AG04450 (cell line): ENCODE measurements at regions of chr4 and their contacts with region 1.

Region 1: DNA sequence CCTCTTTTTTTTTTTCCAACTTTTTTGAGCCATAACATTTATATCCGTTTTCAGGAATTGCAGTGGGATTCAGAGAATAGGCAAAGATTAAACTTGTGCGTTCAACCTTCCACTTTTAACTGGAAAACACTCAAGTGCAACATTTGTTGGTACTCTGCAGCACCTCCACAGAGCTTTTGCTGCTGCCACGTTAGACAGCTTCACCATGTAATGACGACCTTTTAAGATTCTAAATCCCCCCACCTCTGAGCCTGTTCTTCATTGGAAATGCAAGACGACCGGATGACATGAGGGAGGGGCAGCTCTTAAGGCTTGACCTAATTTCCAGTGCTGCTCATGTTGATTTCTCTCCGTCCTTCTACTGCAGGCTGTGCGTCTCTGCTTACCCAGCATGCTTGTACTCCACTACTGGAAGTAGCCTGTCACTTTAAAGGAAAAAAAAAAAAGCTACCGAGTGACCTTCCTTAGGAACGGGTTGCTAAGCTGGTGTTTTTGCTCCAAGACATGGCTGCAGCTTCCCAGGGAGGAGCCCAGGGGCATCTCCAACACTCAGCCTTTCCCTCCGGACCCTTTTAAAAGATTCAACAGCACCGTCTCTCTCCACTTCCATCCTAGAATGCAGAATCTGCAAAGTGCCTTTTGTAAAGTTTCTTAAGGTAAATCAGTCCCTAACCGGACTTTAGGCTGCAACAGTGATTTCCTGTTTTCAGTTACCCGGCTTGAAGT is at the start of gene CC2D2A:
- DNase-seq: no peak
- H3K4me3 ChIP-seq: peak within 1 kb of the TSS; percentile 65
- H3K27ac ChIP-seq: no peak within 1 kb of the TSS
- H3K27me3 ChIP-seq: no peaks in the 10 kb centered on the region
- CTCF ChIP-seq: no peak
- polyA plus RNA-seq, gene CC2D2A: 33.8 and 40.7 TPM in 2 replicates

Region 2: GRCh38 chr4:15231265-15232091 is 238.1 kb before region 1 on chr4:
- CTCF ChIA-PET with region 1: interaction called, 31 read pairs
- POLR2A ChIA-PET with region 1: no interaction called
- DNase-seq: peak; percentile 79
- H3K4me3 ChIP-seq: no peak overlapping the region
- H3K27ac ChIP-seq: peak overlapping the region; percentile 47
- H3K27me3 ChIP-seq: no peaks in the 10 kb centered on the region
- CTCF ChIP-seq: peak; percentile 81

Region 3: GRCh38 chr4:15385928-15386327 is 83.6 kb before region 1 on chr4:
- CTCF ChIA-PET with region 1: no interaction called
- POLR2A ChIA-PET with region 1: no interaction called
- DNase-seq: no peak
- H3K4me3 ChIP-seq: no peak overlapping the region
- H3K27ac ChIP-seq: no peak overlapping the region
- H3K27me3 ChIP-seq: peaks cover 2% of the 10 kb centered on the region
- CTCF ChIP-seq: no peak